B cell (primary cell): ENCODE measurements at regions of chr10 and their contacts with region 1.

Region 1: GRCh38 chr10:69515699-69516259 is 57.4 kb downstream of the NEUROG3 start:
- DNase-seq: peak; percentile 74
- ATAC-seq: peak; percentile 73
- H3K4me3 ChIP-seq: no peak overlapping the region
- H3K4me3 Mint-ChIP-seq: no peak overlapping the region
- H3K27ac ChIP-seq: no peak overlapping the region
- H3K27ac Mint-ChIP-seq: no peak overlapping the region
- H3K4me1 ChIP-seq: no peaks in the 10 kb centered on the region
- H3K4me1 Mint-ChIP-seq: no peaks in the 10 kb centered on the region
- H3K27me3 ChIP-seq: peaks cover 0 to 27% (median 8%) of the 10 kb centered on the region in 4 experiments
- H3K27me3 Mint-ChIP-seq: peaks cover 51% of the 10 kb centered on the region
- CTCF ChIP-seq: peak; percentile 84

Region 2: GRCh38 chr10:69527961-69528360 is 12.2 kb after region 1 on chr10:
- CTCF ChIA-PET with region 1: interaction called, 4 read pairs
- POLR2A ChIA-PET with region 1: no interaction called
- intact Hi-C with region 1: loop called (anchors 1 kb)
- DNase-seq: no peak
- ATAC-seq: no peak
- H3K4me3 ChIP-seq: no peak overlapping the region
- H3K4me3 Mint-ChIP-seq: no peak overlapping the region
- H3K27ac ChIP-seq: no peak overlapping the region
- H3K27ac Mint-ChIP-seq: no peak overlapping the region
- H3K4me1 ChIP-seq: no peaks in the 10 kb centered on the region
- H3K4me1 Mint-ChIP-seq: no peaks in the 10 kb centered on the region
- H3K27me3 ChIP-seq: peaks cover 0 to 3% (median 0%) of the 10 kb centered on the region in 4 experiments
- H3K27me3 Mint-ChIP-seq: peaks cover 15% of the 10 kb centered on the region
- CTCF ChIP-seq: no peak

Region 3: GRCh38 chr10:69639291-69640195 is 123.8 kb after region 1 on chr10:
- CTCF ChIA-PET with region 1: interaction called, 120 read pairs
- POLR2A ChIA-PET with region 1: no interaction called
- intact Hi-C with region 1: no loop called
- DNase-seq: peak; percentile 70
- ATAC-seq: peak; percentile 33
- H3K4me3 ChIP-seq: no peak overlapping the region
- H3K4me3 Mint-ChIP-seq: no peak overlapping the region
- H3K27ac ChIP-seq: no peak overlapping the region
- H3K27ac Mint-ChIP-seq: no peak overlapping the region
- H3K4me1 ChIP-seq: no peaks in the 10 kb centered on the region
- H3K4me1 Mint-ChIP-seq: no peaks in the 10 kb centered on the region
- H3K27me3 ChIP-seq: peaks cover 0 to 8% (median 1%) of the 10 kb centered on the region in 4 experiments
- H3K27me3 Mint-ChIP-seq: peaks cover 3% of the 10 kb centered on the region
- CTCF ChIP-seq: peak; percentile 85

Region 4: GRCh38 chr10:69914398-69915214 is 398.8 kb after region 1 on chr10:
- CTCF ChIA-PET with region 1: interaction called, 12 read pairs
- POLR2A ChIA-PET with region 1: no interaction called
- intact Hi-C with region 1: no loop called
- DNase-seq: peak; percentile 36
- ATAC-seq: no peak
- H3K4me3 ChIP-seq: no peak overlapping the region
- H3K4me3 Mint-ChIP-seq: no peak overlapping the region
- H3K27ac ChIP-seq: no peak overlapping the region
- H3K27ac Mint-ChIP-seq: no peak overlapping the region
- H3K4me1 ChIP-seq: no peaks in the 10 kb centered on the region
- H3K4me1 Mint-ChIP-seq: no peaks in the 10 kb centered on the region
- H3K27me3 ChIP-seq: peaks cover 0 to 2% (median under 1%) of the 10 kb centered on the region in 4 experiments
- H3K27me3 Mint-ChIP-seq: peaks cover 7% of the 10 kb centered on the region
- CTCF ChIP-seq: peak; percentile 72